ENCODE measurements at regions of chr13 and their contacts with region 1.

Region 1: GRCh38 chr13:44160591-44161191 is 212.9 kb upstream of the SERP2 start:
- DNase-seq: peak; percentile 15
- ATAC-seq: 0 out of 2 replicates have a peak, but pooled peaks have one; percentile 37
- H3K4me3 ChIP-seq: no peak overlapping the region
- H3K27ac ChIP-seq: no peak overlapping the region
- H3K4me1 ChIP-seq: peaks cover 7% of the 10 kb centered on the region
- H3K27me3 ChIP-seq: peaks cover 4% of the 10 kb centered on the region
- CTCF ChIP-seq: no peak
- POLR2A ChIP-seq: no peak
- RAD21 ChIP-seq: no peak

Region 2: DNA sequence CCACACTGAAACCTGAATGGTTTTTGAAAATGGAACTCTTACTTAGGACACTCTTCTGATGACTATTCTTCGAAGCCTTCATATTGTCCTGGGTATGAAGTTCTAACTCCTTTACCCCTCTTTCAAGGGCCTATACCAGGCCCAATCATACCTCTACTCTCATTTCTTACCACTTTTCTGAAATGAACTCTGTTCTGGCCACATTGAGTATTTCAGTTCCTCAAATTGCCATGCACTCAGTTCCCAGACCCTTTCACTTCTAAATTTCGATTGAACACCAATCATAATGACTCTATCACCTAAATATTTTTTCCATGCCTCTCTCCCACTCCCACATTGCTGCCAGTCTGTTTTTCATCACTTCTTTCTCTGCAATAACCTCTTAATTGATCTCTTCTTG is 227.3 kb before region 1 on chr13:
- CTCF ChIA-PET with region 1: no interaction called
- POLR2A ChIA-PET with region 1: no interaction called
- dilution Hi-C with region 1: no loop called
- in situ Hi-C with region 1: no loop called
- intact Hi-C with region 1: loop called (anchors 10 kb)
- DNase-seq: no peak
- ATAC-seq: no peak
- H3K4me3 ChIP-seq: no peak overlapping the region
- H3K27ac ChIP-seq: no peak overlapping the region
- H3K4me1 ChIP-seq: no peaks in the 10 kb centered on the region
- H3K27me3 ChIP-seq: peaks cover 21% of the 10 kb centered on the region
- CTCF ChIP-seq: no peak
- POLR2A ChIP-seq: no peak
- RAD21 ChIP-seq: no peak

Region 3: GRCh38 chr13:44093607-44094564 is 66.8 kb before region 1 on chr13:
- CTCF ChIA-PET with region 1: no interaction called
- POLR2A ChIA-PET with region 1: no interaction called
- dilution Hi-C with region 1: no loop called
- in situ Hi-C with region 1: no loop called
- intact Hi-C with region 1: loop called (anchors 10 kb)
- DNase-seq: no peak
- ATAC-seq: no peak
- H3K4me3 ChIP-seq: no peak overlapping the region
- H3K27ac ChIP-seq: no peak overlapping the region
- H3K4me1 ChIP-seq: no peaks in the 10 kb centered on the region
- H3K27me3 ChIP-seq: no peaks in the 10 kb centered on the region; the same call in 1 of the 2 replicates
- CTCF ChIP-seq: no peak
- POLR2A ChIP-seq: no peak
- RAD21 ChIP-seq: no peak

Region 4: DNA sequence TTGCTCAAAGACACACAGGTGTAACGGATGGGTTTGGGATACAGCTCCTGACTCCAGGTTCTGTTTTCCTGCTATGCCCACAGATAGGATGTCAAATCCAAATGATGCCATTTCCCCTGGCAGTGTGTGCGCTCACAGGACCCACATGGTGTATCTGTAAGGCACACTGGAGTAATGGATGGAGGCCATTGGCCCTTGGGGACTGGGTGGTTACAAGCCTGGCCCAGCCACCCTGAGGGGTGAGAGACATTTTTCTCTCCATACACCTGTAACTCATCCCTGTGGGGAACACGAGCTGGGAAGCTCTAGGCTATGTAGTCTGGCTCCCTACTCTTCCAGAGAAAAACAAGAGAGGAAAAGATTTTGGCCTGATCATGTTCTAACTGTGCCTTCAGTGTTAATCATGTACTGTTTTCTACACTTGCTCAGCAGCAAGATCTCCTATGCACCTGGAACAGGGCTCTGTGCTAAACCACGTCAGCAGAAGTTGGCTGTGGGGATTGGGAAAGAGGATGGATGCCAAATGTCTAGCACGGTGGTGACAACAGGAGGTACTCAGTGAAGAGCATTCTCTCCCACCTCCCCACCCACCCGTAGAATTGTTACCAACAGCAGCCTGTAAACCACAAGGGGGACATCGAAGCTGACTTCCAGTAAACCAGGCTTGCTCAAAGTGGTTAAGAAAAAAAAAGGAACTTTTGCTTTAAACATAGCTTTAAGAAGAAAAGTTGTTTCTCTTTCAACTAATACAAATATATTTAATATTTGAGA is 43.9 kb before region 1 on chr13:
- CTCF ChIA-PET with region 1: no interaction called
- POLR2A ChIA-PET with region 1: no interaction called
- dilution Hi-C with region 1: no loop called
- in situ Hi-C with region 1: no loop called
- intact Hi-C with region 1: no loop called
- DNase-seq: peak; percentile 18
- ATAC-seq: peak; percentile 27
- H3K4me3 ChIP-seq: no peak overlapping the region
- H3K27ac ChIP-seq: peak overlapping the region; percentile 13; the same call in 1 of the 2 replicates
- H3K4me1 ChIP-seq: peaks cover 2% of the 10 kb centered on the region; the same call in 1 of the 2 replicates
- H3K27me3 ChIP-seq: no peaks in the 10 kb centered on the region
- CTCF ChIP-seq: peak; percentile 10; the same call in 1 of the 2 replicates
- POLR2A ChIP-seq: no peak
- RAD21 ChIP-seq: 0 out of 2 replicates have a peak, but pooled peaks have one; percentile 16